Mammary epithelial cell (primary cell): ENCODE measurements at regions of chr1 and their contacts with region 1.

Region 1: GRCh38 chr1:37682334-37682987 is 9.9 kb upstream of the CDCA8 start:
- DNase-seq: peak; percentile 47
- H3K4me3 ChIP-seq: no peak overlapping the region
- H3K27ac ChIP-seq: no peak overlapping the region
- H3K4me1 ChIP-seq: no peaks in the 10 kb centered on the region
- H3K27me3 ChIP-seq: no peaks in the 10 kb centered on the region
- CTCF ChIP-seq: peak; percentile 81 to 82

Region 2: GRCh38 chr1:37449936-37450335 is 232.5 kb before region 1 on chr1:
- CTCF ChIA-PET with region 1: no interaction called
- dilution Hi-C with region 1: no loop called
- in situ Hi-C with region 1: loop called (anchors 10 to 25 kb)
- intact Hi-C with region 1: loop called (anchors 1 kb)
- DNase-seq: no peak
- H3K4me3 ChIP-seq: no peak overlapping the region
- H3K27ac ChIP-seq: no peak overlapping the region
- H3K4me1 ChIP-seq: peaks cover 25% of the 10 kb centered on the region
- H3K27me3 ChIP-seq: no peaks in the 10 kb centered on the region
- CTCF ChIP-seq: no peak

Region 3: DNA sequence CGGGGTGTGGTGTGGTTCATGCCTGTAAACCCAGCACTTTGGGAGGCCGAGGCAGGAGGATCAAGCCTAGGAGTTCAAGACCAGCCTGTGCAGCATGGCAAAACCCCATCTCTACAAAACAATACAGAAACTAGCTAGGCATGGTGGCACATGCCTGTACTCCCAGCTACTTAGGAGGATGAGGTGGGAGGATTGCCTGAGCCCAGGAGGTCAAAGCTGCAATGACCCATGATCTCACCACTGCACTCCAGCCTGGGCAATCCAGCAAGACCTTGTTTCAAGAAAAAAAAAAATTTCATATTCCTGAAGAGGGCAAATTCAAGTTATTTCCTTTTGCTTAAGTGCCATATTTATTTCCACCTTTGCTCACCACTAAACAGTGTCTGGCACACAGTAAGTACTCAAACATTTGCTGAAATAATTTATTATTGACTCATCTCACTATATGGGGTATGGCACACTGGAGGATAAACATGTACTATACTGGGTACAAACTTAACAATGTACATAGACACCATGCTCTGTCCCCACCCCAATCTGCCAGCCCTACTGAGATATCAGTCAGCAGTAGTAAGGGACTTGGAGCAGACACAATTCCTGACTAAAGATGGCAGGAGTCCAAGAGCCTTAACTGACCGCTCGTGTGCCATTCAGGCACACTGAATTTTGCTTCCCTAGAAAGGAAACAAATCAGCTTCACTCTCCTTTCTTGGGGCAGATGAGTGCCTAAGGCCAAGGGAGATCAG is 183.4 kb before region 1 on chr1:
- CTCF ChIA-PET with region 1: no interaction called
- dilution Hi-C with region 1: no loop called
- in situ Hi-C with region 1: no loop called
- intact Hi-C with region 1: no loop called
- DNase-seq: peak; percentile 27
- H3K4me3 ChIP-seq: no peak overlapping the region
- H3K27ac ChIP-seq: peak overlapping the region; percentile 11
- H3K4me1 ChIP-seq: peaks cover 9% of the 10 kb centered on the region
- H3K27me3 ChIP-seq: no peaks in the 10 kb centered on the region
- CTCF ChIP-seq: no peak

Region 4: GRCh38 chr1:37514350-37515184 is 167.9 kb before region 1 on chr1 and contains the start of gene MEAF6:
- CTCF ChIA-PET with region 1: interaction called, 3 read pairs
- dilution Hi-C with region 1: no loop called
- in situ Hi-C with region 1: no loop called
- intact Hi-C with region 1: loop called (anchors 2 kb)
- DNase-seq: peak; percentile 77
- H3K4me3 ChIP-seq: peak within 1 kb of the TSS; percentile 86 to 98 (median 87)
- H3K27ac ChIP-seq: peak within 1 kb of the TSS; percentile 92
- H3K4me1 ChIP-seq: peaks cover 14% of the 10 kb centered on the region
- H3K27me3 ChIP-seq: no peaks in the 10 kb centered on the region
- CTCF ChIP-seq: peak; percentile 36 to 44
- total RNA-seq, gene MEAF6: 61.5 to 64.9 TPM

Region 5: DNA sequence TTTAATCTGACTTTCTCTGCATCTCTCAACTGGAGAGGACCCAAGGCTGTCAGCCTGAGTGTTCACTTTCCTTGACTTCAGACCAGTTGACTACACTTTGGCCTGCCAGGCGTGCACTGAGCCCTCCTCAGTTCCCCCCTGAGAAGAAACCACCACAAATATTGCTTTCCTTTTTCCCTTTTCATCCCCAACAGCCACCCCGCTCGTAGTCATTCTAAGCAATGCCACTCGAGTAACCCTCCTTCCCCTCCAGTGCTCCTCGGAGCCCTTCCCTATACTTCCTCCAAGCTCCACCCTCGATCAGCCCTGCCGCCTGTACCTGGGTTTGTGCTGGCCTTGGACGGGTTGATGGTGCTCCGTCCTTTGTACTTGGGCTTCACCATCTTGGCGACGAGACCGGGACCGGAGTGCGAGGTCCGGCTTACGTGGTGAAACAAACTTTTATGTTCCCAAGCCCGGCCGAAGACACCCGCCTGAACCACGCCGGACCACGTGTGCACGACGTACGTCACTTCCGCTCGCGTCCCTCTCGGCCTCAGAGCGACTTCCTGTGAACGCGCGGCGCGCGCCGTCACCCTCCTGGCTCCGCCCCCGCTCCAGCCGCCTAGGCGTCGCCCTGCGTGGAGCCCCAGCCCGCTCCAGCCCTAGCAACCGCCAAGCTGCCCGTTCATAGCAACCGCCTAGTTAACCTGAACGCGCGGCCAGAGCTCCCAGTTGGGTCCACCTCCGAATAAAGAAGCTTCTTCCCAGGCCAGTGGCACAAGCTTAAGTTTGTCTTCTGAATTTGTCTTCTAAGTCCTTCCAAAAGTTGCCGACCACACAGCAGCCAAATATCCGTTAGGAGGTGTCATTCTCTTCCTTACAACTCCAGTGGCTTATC is 86.8 kb before region 1 on chr1 and contains the start of gene GNL2:
- CTCF ChIA-PET with region 1: no interaction called
- dilution Hi-C with region 1: no loop called
- in situ Hi-C with region 1: loop called (anchors 5 to 10 kb)
- intact Hi-C with region 1: no loop called
- DNase-seq: peak; percentile 94
- H3K4me3 ChIP-seq: peak within 1 kb of the TSS; percentile 83 to 91 (median 88)
- H3K27ac ChIP-seq: peak within 1 kb of the TSS; percentile 93
- H3K4me1 ChIP-seq: peaks cover 11% of the 10 kb centered on the region
- H3K27me3 ChIP-seq: no peaks in the 10 kb centered on the region
- CTCF ChIP-seq: no peak
- total RNA-seq, gene GNL2: 56.5 to 74.6 TPM